Transverse colon (tissue), 4 donors: ENCODE measurements at regions of chr18 and their contacts with region 1.

Region 1: DNA sequence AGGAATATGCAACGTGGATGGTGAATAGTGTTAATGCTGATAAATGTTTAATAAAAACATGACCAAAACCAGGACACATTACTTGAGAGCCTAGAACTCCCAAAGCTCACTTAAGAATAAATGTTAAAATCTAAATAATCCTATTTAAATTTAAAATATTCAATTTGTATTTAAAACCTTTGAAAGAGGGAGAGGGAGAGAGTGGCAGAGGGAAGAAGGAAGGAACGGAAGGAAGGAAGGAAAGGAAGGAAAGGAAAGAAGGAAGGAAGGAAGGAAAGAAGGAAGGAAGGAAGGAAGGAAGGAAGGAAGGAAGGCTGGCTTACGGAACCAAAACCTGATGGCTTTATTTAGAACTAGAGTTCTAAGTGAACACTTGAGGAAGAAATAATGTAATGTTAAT is 324.1 kb upstream of the SYT4 start:
- DNase-seq: no peak
- H3K4me3 ChIP-seq: no peak overlapping the region
- H3K27ac ChIP-seq: no peak overlapping the region
- H3K4me1 ChIP-seq: no peaks in the 10 kb centered on the region
- H3K27me3 ChIP-seq: no peaks in the 10 kb centered on the region
- CTCF ChIP-seq: no peak
- EP300 ChIP-seq: no peak
- POLR2A ChIP-seq: no peak

Region 2: GRCh38 chr18:43714343-43715010 is 113.0 kb after region 1 on chr18:
- in situ Hi-C with region 1: no loop called
- intact Hi-C with region 1: no loop called
- DNase-seq: no peak
- H3K4me3 ChIP-seq: no peak overlapping the region
- H3K27ac ChIP-seq: no peak overlapping the region
- H3K4me1 ChIP-seq: no peaks in the 10 kb centered on the region
- H3K27me3 ChIP-seq: no peaks in the 10 kb centered on the region
- CTCF ChIP-seq: no peak
- EP300 ChIP-seq: no peak
- POLR2A ChIP-seq: no peak

Region 3: GRCh38 chr18:44290366-44290977 is 689.0 kb after region 1 on chr18:
- in situ Hi-C with region 1: no loop called
- intact Hi-C with region 1: loop called (anchors 5 kb)
- DNase-seq: no peak
- H3K4me3 ChIP-seq: no peak overlapping the region
- H3K27ac ChIP-seq: no peak overlapping the region
- H3K4me1 ChIP-seq: no peaks in the 10 kb centered on the region
- H3K27me3 ChIP-seq: no peaks in the 10 kb centered on the region
- CTCF ChIP-seq: no peak
- EP300 ChIP-seq: no peak
- POLR2A ChIP-seq: no peak